Calu3 (cell line): ENCODE measurements at regions of chr20 and their contacts with region 1.

Region 1: GRCh38 chr20:53617791-53618489 is 24.3 kb upstream of the ZNF217 start:
- DNase-seq: peak; percentile 58
- H3K4me3 Mint-ChIP-seq: no peak overlapping the region
- H3K27ac Mint-ChIP-seq: peak overlapping the region; percentile 28
- H3K4me1 Mint-ChIP-seq: peaks cover 44% of the 10 kb centered on the region
- H3K27me3 Mint-ChIP-seq: no peaks in the 10 kb centered on the region
- CTCF ChIP-seq: no peak

Region 2: DNA sequence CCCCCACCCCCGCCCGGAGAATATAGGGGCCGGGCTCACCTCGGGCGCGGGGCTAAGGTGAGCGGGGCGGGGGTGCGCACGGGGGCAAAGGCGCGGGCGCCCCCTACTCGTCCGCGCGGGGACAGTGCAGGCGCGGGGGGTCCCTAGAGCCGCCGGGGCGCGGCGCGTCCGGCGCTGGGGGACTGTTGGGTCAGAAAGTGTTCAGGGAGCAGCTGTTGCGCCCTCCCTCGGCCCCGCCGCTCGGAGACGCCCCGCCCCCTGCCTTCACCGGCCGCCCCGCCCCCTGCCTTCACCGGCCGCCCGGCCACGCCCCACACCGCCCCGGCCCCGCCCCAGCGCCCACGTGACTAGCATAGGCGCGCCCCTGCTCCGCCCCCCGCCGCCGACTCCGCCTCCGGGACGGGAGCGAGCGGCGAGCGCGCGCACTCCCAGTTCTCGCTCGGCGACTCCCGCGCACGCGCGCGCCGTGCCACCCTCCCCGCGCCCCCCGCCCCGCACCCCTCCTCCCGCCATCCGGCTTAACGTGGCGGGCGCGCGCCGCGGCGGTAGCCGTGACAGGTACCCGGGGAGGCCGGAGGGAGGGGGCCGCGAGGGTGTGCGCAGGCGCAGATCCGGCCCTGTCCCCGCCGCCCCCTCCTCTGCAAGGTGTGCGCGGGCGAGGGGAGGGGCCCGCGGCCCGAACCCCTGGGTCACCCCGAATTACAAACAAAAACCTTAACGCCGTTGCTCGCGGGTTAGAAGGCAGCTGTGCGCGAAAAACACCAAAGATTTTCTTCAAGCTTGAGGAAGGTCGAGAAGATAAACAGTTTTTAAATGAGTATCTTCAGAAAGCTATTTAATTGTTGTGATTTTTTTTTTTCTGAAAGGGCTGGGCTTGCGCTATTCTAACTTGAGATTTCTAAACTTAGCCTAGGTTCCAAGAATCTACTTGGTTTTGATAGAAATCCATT is 23.6 kb before region 1 on chr20:
- CTCF ChIA-PET with region 1: interaction called, 7 read pairs
- intact Hi-C with region 1: loop called (anchors 2 kb)
- DNase-seq: peak; percentile 100
- H3K4me3 Mint-ChIP-seq: peak overlapping the region; percentile 69
- H3K27ac Mint-ChIP-seq: peak overlapping the region; percentile 86
- H3K4me1 Mint-ChIP-seq: peaks cover 65% of the 10 kb centered on the region
- H3K27me3 Mint-ChIP-seq: no peaks in the 10 kb centered on the region
- CTCF ChIP-seq: peak; percentile 53

Region 3: DNA sequence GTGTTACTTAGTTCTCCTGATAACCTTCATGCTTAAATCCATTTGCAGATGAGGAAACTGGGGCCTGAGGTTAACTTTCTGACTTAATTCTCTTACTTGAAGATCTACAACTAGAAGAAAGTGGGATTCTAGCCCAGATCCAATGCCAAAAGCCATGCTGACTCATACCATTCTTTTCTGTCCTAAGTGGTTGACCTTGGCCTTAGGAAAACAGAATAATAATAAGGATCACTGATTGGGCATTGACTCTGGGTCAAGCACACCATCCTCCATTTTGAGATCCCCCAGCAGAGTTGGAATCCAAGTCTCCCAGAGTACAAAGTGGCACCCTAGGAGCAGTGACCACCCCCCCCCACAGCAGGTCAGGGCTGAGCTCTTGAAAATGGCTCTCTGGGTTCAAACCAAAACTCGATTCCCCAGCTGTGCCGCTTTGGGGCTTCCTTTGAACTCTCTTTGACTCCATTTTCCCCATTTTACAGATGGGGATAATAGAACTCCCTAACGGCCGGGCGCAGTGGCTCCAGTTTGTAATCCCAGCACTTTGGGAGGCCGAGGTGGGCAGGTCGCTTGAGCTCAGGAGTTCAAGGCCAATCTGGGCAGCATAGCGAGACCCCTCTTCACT is 11.5 kb before region 1 on chr20:
- CTCF ChIA-PET with region 1: no interaction called
- intact Hi-C with region 1: no loop called
- DNase-seq: no peak
- H3K4me3 Mint-ChIP-seq: no peak overlapping the region
- H3K27ac Mint-ChIP-seq: no peak overlapping the region
- H3K4me1 Mint-ChIP-seq: peaks cover 21% of the 10 kb centered on the region
- H3K27me3 Mint-ChIP-seq: no peaks in the 10 kb centered on the region
- CTCF ChIP-seq: no peak